CD14-positive monocyte (primary cell): ENCODE measurements at regions of chr11 and their contacts with region 1.

Region 1: DNA sequence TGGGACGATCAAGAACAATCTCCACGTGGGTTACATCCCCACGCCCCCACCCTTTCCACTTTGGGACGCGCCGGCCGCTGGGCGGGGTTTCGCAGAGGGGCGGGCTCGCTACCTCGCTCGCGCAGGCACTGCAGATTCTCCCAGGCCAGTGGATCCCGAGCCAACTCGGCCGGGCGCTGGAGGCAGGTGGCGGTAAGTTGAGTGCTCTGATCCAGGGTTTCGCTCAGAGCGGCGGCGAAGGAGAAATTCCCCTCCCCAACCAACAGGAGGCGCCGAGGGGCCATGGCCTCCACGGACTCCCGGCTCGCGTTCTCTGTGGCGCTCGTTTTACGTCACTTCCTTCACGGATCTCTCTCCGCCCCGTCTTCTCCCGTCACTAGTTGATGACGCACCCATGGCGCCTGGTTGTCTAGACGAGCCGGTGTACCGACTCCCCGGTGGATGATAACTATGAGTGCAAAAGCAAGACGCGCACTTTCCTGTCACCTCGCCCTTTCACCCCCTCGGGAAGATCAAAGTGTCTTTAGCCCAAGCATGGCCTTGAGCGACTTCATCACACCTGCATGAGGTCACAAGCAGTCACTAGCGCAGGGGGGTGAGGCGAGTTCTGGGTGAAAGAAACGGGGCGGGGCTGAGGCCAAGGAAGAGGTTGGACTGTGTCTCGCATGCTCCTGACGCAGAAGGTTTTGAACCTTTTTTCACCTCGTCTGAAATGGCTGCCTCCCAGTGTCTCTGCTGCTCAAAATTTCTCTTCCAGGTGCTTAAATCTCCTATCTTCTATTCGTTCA is at the starts of genes CFAP68 and FDXACB1:
- DNase-seq: peak; percentile 96 to 98 (median 97)
- H3K4me3 ChIP-seq: peak within 1 kb of the TSS; percentile 67 to 82 (median 71)
- H3K4me3 Mint-ChIP-seq: peak within 1 kb of the TSS; percentile 88 to 95
- H3K27ac ChIP-seq: peak within 1 kb of the TSS; percentile 96 to 100
- H3K27ac Mint-ChIP-seq: peak within 1 kb of the TSS; percentile 99 to 100 (median 100)
- H3K4me1 ChIP-seq: peaks cover 29 to 35% of the 10 kb centered on the region in 2 donors
- H3K4me1 Mint-ChIP-seq: peaks cover 35% of the 10 kb centered on the region
- H3K27me3 ChIP-seq: no peaks in the 10 kb centered on the region
- H3K27me3 Mint-ChIP-seq: peaks cover 0 to 4% (median 2%) of the 10 kb centered on the region in 3 donors
- CTCF ChIP-seq: peak; percentile 99
- polyA plus RNA-seq, gene CFAP68: 3.6 to 5.3 (median 5.0) TPM
- polyA plus RNA-seq, gene FDXACB1: 1.9 to 2.3 (median 2.0) TPM

Region 2: DNA sequence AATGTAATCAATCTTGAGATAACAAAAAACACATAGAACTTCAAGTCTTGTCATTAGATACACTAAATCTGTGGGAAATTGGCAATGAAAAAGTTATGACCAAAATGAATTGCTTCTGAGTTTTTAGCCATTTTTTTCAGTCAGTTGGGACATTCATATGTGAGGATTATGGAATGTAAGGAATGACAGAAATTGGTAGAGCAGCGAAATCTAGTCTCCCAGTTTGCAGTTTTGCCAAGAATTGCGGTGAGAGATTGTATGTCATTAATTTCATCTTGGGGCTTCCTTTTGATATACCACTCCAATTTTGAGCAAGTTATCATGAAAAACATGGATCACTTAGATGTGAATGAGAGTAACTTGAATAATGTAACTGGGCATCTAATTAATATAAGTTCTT is 226.9 kb before region 1 on chr11:
- intact Hi-C with region 1: no loop called
- DNase-seq: no peak
- H3K4me3 ChIP-seq: no peak overlapping the region
- H3K4me3 Mint-ChIP-seq: no peak overlapping the region
- H3K27ac ChIP-seq: no peak overlapping the region
- H3K27ac Mint-ChIP-seq: no peak overlapping the region
- H3K4me1 ChIP-seq: no peaks in the 10 kb centered on the region
- H3K4me1 Mint-ChIP-seq: peaks cover 2% of the 10 kb centered on the region
- H3K27me3 ChIP-seq: no peaks in the 10 kb centered on the region
- H3K27me3 Mint-ChIP-seq: no peaks in the 10 kb centered on the region
- CTCF ChIP-seq: no peak

Region 3: GRCh38 chr11:111911563-111912401 is 32.7 kb after region 1 on chr11 and contains the start of gene CRYAB:
- intact Hi-C with region 1: no loop called
- DNase-seq: no peak
- H3K4me3 ChIP-seq: no peak within 1 kb of the TSS
- H3K4me3 Mint-ChIP-seq: peak within 1 kb of the TSS in 1 of 2 donors; percentile 41
- H3K27ac ChIP-seq: no peak within 1 kb of the TSS
- H3K27ac Mint-ChIP-seq: no peak within 1 kb of the TSS
- H3K4me1 ChIP-seq: no peaks in the 10 kb centered on the region
- H3K4me1 Mint-ChIP-seq: no peaks in the 10 kb centered on the region
- H3K27me3 ChIP-seq: peaks cover 13 to 43% of the 10 kb centered on the region in 2 donors
- H3K27me3 Mint-ChIP-seq: peaks cover 47 to 58% (median 50%) of the 10 kb centered on the region in 3 donors
- CTCF ChIP-seq: no peak
- polyA plus RNA-seq, gene CRYAB: not detected

Region 4: DNA sequence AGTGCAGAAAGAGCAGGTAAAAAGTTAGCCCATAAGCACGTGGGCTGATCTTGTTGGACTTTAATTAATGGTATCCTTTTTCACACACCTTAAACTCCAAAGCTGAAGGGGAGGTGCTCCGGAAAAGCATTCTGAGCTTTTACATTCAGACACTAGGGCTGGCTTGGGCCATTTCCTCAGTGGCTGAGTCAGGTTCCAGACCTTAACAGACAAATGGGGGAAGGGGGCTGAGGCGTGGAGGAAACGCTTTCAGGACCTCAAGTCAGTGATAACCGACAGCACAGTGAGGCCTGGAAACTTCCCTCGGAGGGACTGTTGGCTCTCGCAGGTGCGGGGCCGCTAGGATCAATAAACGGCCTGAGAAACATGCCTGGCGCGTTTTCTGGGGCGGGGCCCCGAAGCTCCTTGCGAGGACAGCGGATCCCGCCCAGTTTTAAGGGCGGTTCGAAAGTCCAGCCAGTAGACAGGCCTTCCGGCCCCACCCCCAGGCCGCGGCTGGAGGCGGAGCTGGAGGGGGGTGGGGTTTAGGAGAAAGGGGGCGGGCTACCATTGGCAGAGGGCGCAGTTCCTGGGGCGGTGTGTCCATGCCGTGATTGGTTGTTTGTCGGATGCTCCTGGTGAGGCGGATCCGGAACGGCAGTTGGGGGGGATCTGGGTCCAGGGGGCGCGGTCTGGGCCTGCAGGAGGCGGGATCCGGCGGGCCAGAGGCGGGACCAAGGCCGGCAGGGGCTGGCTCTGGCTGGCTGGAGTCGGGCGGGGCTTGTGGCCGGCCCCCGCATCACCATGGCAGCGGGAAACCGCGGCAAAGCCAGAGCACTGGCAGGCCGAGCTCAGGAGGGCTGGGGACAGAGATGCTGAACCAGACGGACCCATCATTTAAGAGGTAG is 47.7 kb after region 1 on chr11:
- intact Hi-C with region 1: loop called (anchors 2 to 5 kb)
- DNase-seq: peak; percentile 91 to 95 (median 94)
- H3K4me3 ChIP-seq: peak overlapping the region; percentile 61 to 77 (median 73)
- H3K4me3 Mint-ChIP-seq: peak overlapping the region; percentile 85 to 92
- H3K27ac ChIP-seq: peak overlapping the region; percentile 70 to 81
- H3K27ac Mint-ChIP-seq: peak overlapping the region; percentile 87 to 95 (median 93)
- H3K4me1 ChIP-seq: peaks cover 24 to 34% of the 10 kb centered on the region in 2 donors
- H3K4me1 Mint-ChIP-seq: peaks cover 28% of the 10 kb centered on the region
- H3K27me3 ChIP-seq: no peaks in the 10 kb centered on the region
- H3K27me3 Mint-ChIP-seq: peaks cover 0 to 2% (median 1%) of the 10 kb centered on the region in 3 donors
- CTCF ChIP-seq: no peak

Region 5: GRCh38 chr11:112074026-112074811 is 195.2 kb after region 1 on chr11 and contains the start of gene NKAPD1:
- intact Hi-C with region 1: loop called (anchors 10 kb)
- DNase-seq: peak; percentile 84 to 87 (median 85)
- H3K4me3 ChIP-seq: peak within 1 kb of the TSS; percentile 59 to 96 (median 73)
- H3K4me3 Mint-ChIP-seq: peak within 1 kb of the TSS; percentile 92 to 98
- H3K27ac ChIP-seq: peak within 1 kb of the TSS; percentile 78 to 91
- H3K27ac Mint-ChIP-seq: peak within 1 kb of the TSS; percentile 94 to 100 (median 99)
- H3K4me1 ChIP-seq: peaks cover 12 to 20% of the 10 kb centered on the region in 2 donors
- H3K4me1 Mint-ChIP-seq: peaks cover 21% of the 10 kb centered on the region
- H3K27me3 ChIP-seq: no peaks in the 10 kb centered on the region
- H3K27me3 Mint-ChIP-seq: no peaks in the 10 kb centered on the region
- CTCF ChIP-seq: no peak
- polyA plus RNA-seq, gene NKAPD1: 5.3 to 9.4 (median 7.7) TPM